Activated CD4-positive, alpha-beta T cell treated with anti-CD3 and anti-CD28 coated beads, Interleukin-2, amount 10 ng/mL, durations not matched to agents 24 days and 14 days (primary cell): ENCODE measurements at regions of chr4 and their contacts with region 1.

Region 1: DNA sequence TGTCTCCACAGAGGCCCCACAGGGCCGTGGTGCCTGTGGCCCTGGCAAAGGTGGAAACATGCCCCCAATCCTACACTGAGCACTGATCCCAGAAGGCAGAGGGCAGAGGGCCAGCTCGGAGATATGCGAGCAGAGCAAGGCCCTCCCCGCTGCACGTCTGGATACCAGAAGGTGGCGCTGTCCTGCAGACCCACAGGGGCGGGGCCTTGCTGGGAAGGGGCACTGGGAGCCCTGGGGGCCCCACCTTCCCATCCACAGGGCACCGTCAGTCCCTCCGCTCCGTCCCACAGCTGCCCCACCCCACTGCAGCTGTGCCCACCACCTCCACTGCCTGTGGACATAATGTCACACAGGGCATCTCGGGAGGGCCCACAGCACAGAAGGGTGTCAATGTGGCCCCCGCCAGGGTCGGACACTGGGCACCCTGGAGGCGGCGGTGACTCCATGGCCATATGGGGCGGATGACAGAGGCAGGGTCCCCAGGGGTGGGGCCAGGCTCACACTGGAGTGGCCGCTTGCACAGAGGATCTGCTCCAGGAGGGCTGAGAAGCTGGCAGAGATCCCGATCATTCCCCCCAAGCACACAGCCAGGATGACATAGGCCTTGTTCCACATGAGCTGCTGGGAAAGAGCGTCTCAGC is 4.8 kb downstream of the SLC49A3 start:
- DNase-seq: peak; percentile 86
- H3K4me3 Mint-ChIP-seq: no peak overlapping the region
- H3K27ac Mint-ChIP-seq: no peak overlapping the region
- H3K4me1 Mint-ChIP-seq: peaks cover 4% of the 10 kb centered on the region
- H3K27me3 Mint-ChIP-seq: peaks cover 5% of the 10 kb centered on the region

Region 2: GRCh38 chr4:705278-706082 is 21.4 kb after region 1 on chr4 and contains the start of gene PCGF3:
- intact Hi-C with region 1: loop called (anchors 1 kb)
- DNase-seq: peak; percentile 99
- H3K4me3 Mint-ChIP-seq: peak within 1 kb of the TSS; percentile 91
- H3K27ac Mint-ChIP-seq: peak within 1 kb of the TSS; percentile 86
- H3K4me1 Mint-ChIP-seq: peaks cover 17% of the 10 kb centered on the region
- H3K27me3 Mint-ChIP-seq: no peaks in the 10 kb centered on the region
- total RNA-seq, gene PCGF3: 32.1 and 34.5 TPM in 2 replicates

Region 3: DNA sequence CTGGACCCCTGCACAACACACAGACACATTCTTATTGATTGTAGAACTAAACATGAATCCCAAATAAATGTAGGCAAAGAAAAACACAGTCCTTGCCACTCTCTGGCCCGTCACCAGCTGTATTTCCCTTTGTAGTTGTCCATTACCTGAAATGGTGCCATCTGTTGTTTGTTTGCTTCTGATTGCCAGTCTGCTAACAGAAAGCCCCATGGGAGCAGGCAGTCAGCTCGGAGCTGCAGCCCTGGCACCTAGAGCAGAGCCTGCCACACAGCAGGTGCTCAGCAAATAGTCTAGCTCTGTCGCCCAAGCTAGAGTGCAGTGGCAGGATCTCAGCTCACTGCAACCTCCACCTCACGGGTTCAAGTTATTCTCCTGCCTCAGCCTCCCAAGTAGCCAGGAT is 113.0 kb after region 1 on chr4:
- intact Hi-C with region 1: no loop called
- DNase-seq: no peak
- H3K4me3 Mint-ChIP-seq: no peak overlapping the region
- H3K27ac Mint-ChIP-seq: no peak overlapping the region
- H3K4me1 Mint-ChIP-seq: peaks cover 24% of the 10 kb centered on the region
- H3K27me3 Mint-ChIP-seq: peaks cover 37% of the 10 kb centered on the region

Region 4: DNA sequence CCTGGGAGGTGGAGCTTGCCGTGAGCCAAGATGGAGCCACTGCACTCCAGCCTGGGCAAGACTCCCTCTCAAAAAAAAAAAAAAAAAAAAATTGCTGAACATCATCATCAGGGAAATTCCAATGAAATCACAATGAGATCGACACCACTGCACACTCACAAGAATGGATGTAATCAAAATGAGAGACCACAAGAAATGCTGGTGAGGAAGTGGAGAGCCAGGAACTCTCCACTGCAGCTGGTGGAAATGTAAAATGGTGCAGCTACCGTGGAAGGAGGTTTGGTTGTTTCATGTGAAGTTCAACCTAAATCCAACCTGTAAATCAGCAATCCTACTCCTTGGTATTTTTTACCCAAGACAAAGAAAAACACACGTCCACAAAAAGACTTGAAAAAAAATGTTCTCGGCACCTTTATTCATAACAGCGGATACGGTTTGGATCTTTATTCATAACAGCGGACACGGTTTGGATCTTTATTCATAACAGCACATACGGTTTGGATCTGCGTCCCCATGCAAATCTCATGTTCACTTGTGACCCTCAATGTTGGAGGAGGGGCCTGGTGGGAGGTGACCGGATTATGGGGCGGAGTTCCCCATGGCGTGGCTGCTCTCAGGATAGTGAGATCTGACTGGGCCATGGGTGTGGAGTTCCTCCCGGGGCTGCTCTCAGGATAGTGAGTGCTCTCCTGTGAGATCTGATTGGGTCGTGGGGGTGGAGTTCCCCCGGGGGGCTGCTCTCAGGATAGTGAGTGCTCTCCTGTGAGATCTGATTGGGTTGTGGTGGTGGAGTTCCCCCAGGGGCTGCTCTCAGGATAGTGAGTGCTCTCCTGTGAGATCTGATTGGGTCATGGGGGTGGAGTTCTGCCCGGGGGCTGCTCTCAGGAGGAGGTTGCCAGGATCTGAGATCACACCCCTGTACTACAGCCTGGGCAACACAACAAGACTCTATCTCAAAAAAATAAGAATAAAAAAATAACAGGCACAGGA is 240.3 kb after region 1 on chr4:
- intact Hi-C with region 1: no loop called
- DNase-seq: no peak
- H3K4me3 Mint-ChIP-seq: peak overlapping the region; percentile 24
- H3K27ac Mint-ChIP-seq: peak overlapping the region; percentile 90
- H3K4me1 Mint-ChIP-seq: peaks cover 41% of the 10 kb centered on the region
- H3K27me3 Mint-ChIP-seq: no peaks in the 10 kb centered on the region

Region 5: DNA sequence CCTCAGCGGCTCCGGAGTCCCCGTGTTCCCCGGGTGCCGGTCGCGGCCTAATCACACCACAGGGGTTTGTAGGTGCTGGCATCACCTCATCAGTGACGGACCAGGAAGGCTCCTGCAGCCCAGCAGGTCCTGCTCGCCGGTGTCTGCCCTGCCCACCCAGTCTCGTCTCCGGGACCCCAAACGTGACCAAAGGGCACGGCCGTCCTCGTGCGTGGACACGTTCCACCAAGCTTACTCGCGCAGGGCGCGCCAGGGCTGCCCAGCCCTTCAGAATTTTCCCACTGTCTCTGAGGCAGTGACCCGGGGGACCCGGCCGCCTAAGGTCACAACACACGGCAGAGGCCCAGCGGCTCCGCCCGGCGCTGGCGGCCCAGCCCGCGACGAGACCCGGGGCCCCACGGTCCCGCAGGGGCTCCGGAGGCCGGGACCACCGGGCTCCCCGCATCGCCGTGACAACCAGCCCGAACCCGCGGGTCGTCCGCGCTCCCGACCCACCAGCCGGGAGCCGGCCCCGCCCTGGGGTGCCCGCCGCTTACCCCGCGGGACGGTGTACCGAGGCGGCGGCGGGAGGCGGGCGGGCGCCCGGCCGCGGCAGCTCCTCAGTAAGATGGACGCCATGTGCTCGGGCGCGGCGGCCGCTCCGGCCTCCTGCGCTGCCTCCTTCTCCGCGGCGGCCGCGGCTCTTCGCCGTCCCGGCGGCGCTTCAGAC is 1171.4 kb after region 1 on chr4:
- intact Hi-C with region 1: no loop called
- DNase-seq: peak; percentile 79
- H3K4me3 Mint-ChIP-seq: peak overlapping the region; percentile 90
- H3K27ac Mint-ChIP-seq: peak overlapping the region; percentile 82
- H3K4me1 Mint-ChIP-seq: peaks cover 30% of the 10 kb centered on the region
- H3K27me3 Mint-ChIP-seq: no peaks in the 10 kb centered on the region